CD4-positive, alpha-beta T cell (primary cell): ENCODE measurements at regions of chr3 and their contacts with region 1.

Region 1: GRCh38 chr3:184250167-184250828 is 826 bp downstream of the EEF1AKMT4 start:
- DNase-seq: peak; percentile 77 to 92 (median 86)
- ATAC-seq: peak; percentile 62
- H3K4me3 ChIP-seq: peak overlapping the region; percentile 86
- H3K4me3 Mint-ChIP-seq: peak overlapping the region; percentile 93
- H3K27ac ChIP-seq: peak overlapping the region; percentile 61 to 79
- H3K27ac Mint-ChIP-seq: peak overlapping the region; percentile 94
- H3K4me1 ChIP-seq: peaks cover 28% of the 10 kb centered on the region
- H3K4me1 Mint-ChIP-seq: peaks cover 21% of the 10 kb centered on the region
- H3K27me3 ChIP-seq: no peaks in the 10 kb centered on the region
- H3K27me3 Mint-ChIP-seq: no peaks in the 10 kb centered on the region
- CTCF ChIP-seq: peak; percentile 88

Region 2: GRCh38 chr3:183895296-183895695 is 355.0 kb before region 1 on chr3:
- CTCF ChIA-PET with region 1: no interaction called
- POLR2A ChIA-PET with region 1: no interaction called
- intact Hi-C with region 1: loop called (anchors 1 to 2 kb)
- DNase-seq: peak in 9 of 14 experiments; percentile 6 to 76 (median 20)
- ATAC-seq: peak; percentile 88
- H3K4me3 ChIP-seq: no peak overlapping the region
- H3K4me3 Mint-ChIP-seq: no peak overlapping the region
- H3K27ac ChIP-seq: no peak overlapping the region
- H3K27ac Mint-ChIP-seq: no peak overlapping the region
- H3K4me1 ChIP-seq: peaks cover 4% of the 10 kb centered on the region
- H3K4me1 Mint-ChIP-seq: no peaks in the 10 kb centered on the region
- H3K27me3 ChIP-seq: peaks cover 5 to 6% of the 10 kb centered on the region in 2 experiments
- H3K27me3 Mint-ChIP-seq: peaks cover 13% of the 10 kb centered on the region
- CTCF ChIP-seq: peak; percentile 75

Region 3: GRCh38 chr3:184135149-184135910 is 115.0 kb before region 1 on chr3 and contains the start of gene EIF2B5:
- CTCF ChIA-PET with region 1: interaction called, 6 read pairs
- POLR2A ChIA-PET with region 1: interaction called, 4 read pairs
- intact Hi-C with region 1: loop called in 1 of 2 experiments (anchors 2 kb)
- DNase-seq: peak; percentile 72 to 95 (median 82)
- ATAC-seq: peak; percentile 88
- H3K4me3 ChIP-seq: peak within 1 kb of the TSS; percentile 99
- H3K4me3 Mint-ChIP-seq: peak within 1 kb of the TSS; percentile 99
- H3K27ac ChIP-seq: peak within 1 kb of the TSS; percentile 71 to 76
- H3K27ac Mint-ChIP-seq: peak within 1 kb of the TSS; percentile 97
- H3K4me1 ChIP-seq: peaks cover 29% of the 10 kb centered on the region
- H3K4me1 Mint-ChIP-seq: peaks cover 50% of the 10 kb centered on the region
- H3K27me3 ChIP-seq: no peaks in the 10 kb centered on the region
- H3K27me3 Mint-ChIP-seq: no peaks in the 10 kb centered on the region
- CTCF ChIP-seq: peak; percentile 31
- total RNA-seq, gene EIF2B5: 53.6 TPM

Region 4: DNA sequence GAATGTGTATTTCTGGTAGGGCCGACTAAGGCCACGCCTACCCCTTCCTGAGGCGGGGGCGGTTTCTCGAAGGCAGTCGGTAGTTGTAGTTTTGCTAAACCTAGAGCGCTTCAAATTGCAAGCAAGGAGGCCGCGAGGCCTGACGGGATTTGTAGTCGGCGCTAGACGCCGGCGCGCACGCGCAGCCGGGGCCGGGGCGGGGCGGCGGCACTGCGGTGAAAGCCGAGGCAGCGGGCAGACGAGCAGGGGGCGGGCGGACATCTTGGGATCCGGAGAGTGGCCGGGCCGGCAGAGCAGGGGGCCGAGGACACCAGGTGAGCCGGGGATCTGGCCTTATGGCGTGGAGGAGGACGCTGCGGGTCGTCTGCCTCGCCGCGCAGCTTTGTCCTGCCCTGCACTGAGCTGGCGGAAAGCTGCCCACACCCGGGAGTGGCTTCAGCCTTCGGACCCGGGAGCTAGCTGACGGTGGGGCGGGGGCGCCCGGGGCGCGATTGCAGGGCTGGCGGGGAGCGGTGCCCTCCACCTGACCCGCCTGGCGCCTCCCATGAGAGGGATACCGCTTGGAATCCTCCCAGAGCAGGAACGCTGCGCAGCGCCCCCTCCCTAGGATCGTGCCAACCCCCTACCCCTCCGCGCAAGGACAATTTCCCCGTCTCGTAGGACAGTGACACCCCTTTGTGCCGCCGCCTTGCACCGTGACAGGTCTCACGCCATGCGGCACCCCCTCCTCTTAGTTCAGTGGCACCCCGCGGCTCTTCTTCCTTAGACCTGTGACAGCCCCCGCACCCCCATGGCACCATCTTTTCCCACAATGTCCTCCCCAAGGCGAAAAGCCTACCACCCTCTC is 75.4 kb before region 1 on chr3 and contains the start of gene AP2M1:
- CTCF ChIA-PET with region 1: interaction called, 5 read pairs
- POLR2A ChIA-PET with region 1: no interaction called
- intact Hi-C with region 1: loop called in 1 of 2 experiments (anchors 1 kb)
- DNase-seq: peak; percentile 94 to 99 (median 97)
- ATAC-seq: peak; percentile 98
- H3K4me3 ChIP-seq: peak within 1 kb of the TSS; percentile 87
- H3K4me3 Mint-ChIP-seq: peak within 1 kb of the TSS; percentile 96
- H3K27ac ChIP-seq: peak within 1 kb of the TSS in 1 of 2 donors; percentile 79
- H3K27ac Mint-ChIP-seq: peak within 1 kb of the TSS; percentile 86
- H3K4me1 ChIP-seq: peaks cover 35% of the 10 kb centered on the region
- H3K4me1 Mint-ChIP-seq: peaks cover 42% of the 10 kb centered on the region
- H3K27me3 ChIP-seq: no peaks in the 10 kb centered on the region
- H3K27me3 Mint-ChIP-seq: no peaks in the 10 kb centered on the region
- CTCF ChIP-seq: no peak
- total RNA-seq, gene AP2M1: 123 to 136 TPM

Region 5: GRCh38 chr3:184229394-184230080 is 20.8 kb before region 1 on chr3 and contains the start of gene VWA5B2:
- CTCF ChIA-PET with region 1: interaction called, 21 read pairs
- POLR2A ChIA-PET with region 1: interaction called, 7 read pairs
- intact Hi-C with region 1: loop called (anchors 1 kb)
- DNase-seq: peak; percentile 46 to 89 (median 64)
- ATAC-seq: peak; percentile 97
- H3K4me3 ChIP-seq: peak within 1 kb of the TSS; percentile 53
- H3K4me3 Mint-ChIP-seq: peak within 1 kb of the TSS; percentile 85
- H3K27ac ChIP-seq: no peak within 1 kb of the TSS
- H3K27ac Mint-ChIP-seq: no peak within 1 kb of the TSS
- H3K4me1 ChIP-seq: peaks cover 24% of the 10 kb centered on the region
- H3K4me1 Mint-ChIP-seq: peaks cover 14% of the 10 kb centered on the region
- H3K27me3 ChIP-seq: peaks cover 51 to 52% of the 10 kb centered on the region in 2 experiments
- H3K27me3 Mint-ChIP-seq: peaks cover 72% of the 10 kb centered on the region
- CTCF ChIP-seq: peak; percentile 23
- total RNA-seq, gene VWA5B2: not detected

Region 6: GRCh38 chr3:184362668-184363540 is 112.6 kb after region 1 on chr3:
- CTCF ChIA-PET with region 1: no interaction called
- POLR2A ChIA-PET with region 1: no interaction called
- intact Hi-C with region 1: loop called in 1 of 2 experiments (anchors 5 kb)
- DNase-seq: peak; percentile 81 to 98 (median 90)
- ATAC-seq: peak; percentile 72
- H3K4me3 ChIP-seq: peak overlapping the region; percentile 94
- H3K4me3 Mint-ChIP-seq: peak overlapping the region; percentile 100
- H3K27ac ChIP-seq: peak overlapping the region; percentile 71 to 80
- H3K27ac Mint-ChIP-seq: peak overlapping the region; percentile 97
- H3K4me1 ChIP-seq: peaks cover 37% of the 10 kb centered on the region
- H3K4me1 Mint-ChIP-seq: peaks cover 26% of the 10 kb centered on the region
- H3K27me3 ChIP-seq: no peaks in the 10 kb centered on the region
- H3K27me3 Mint-ChIP-seq: no peaks in the 10 kb centered on the region
- CTCF ChIP-seq: peak; percentile 48

Region 7: GRCh38 chr3:184409331-184409926 is 159.1 kb after region 1 on chr3:
- CTCF ChIA-PET with region 1: no interaction called
- POLR2A ChIA-PET with region 1: no interaction called
- intact Hi-C with region 1: no loop called
- DNase-seq: no peak
- ATAC-seq: no peak
- H3K4me3 ChIP-seq: no peak overlapping the region
- H3K4me3 Mint-ChIP-seq: no peak overlapping the region
- H3K27ac ChIP-seq: no peak overlapping the region
- H3K27ac Mint-ChIP-seq: no peak overlapping the region
- H3K4me1 ChIP-seq: no peaks in the 10 kb centered on the region
- H3K4me1 Mint-ChIP-seq: no peaks in the 10 kb centered on the region
- H3K27me3 ChIP-seq: no peaks in the 10 kb centered on the region
- H3K27me3 Mint-ChIP-seq: no peaks in the 10 kb centered on the region
- CTCF ChIP-seq: no peak